Caco-2 (cell line): ENCODE measurements at regions of chr9 and their contacts with region 1.

Region 1: GRCh38 chr9:96391021-96391765 is 7.7 kb upstream of the SLC35D2 start:
- DNase-seq: peak; percentile 84 to 91
- H3K4me3 ChIP-seq: no peak overlapping the region
- H3K4me3 Mint-ChIP-seq: no peak overlapping the region
- H3K27ac Mint-ChIP-seq: peak overlapping the region; percentile 87
- H3K4me1 ChIP-seq: peaks cover 37% of the 10 kb centered on the region
- H3K4me1 Mint-ChIP-seq: peaks cover 30% of the 10 kb centered on the region
- H3K27me3 ChIP-seq: no peaks in the 10 kb centered on the region
- H3K27me3 Mint-ChIP-seq: no peaks in the 10 kb centered on the region
- CTCF ChIP-seq: no peak

Region 2: GRCh38 chr9:96344458-96345180 is 46.6 kb before region 1 on chr9:
- CTCF ChIA-PET with region 1: no interaction called
- POLR2A ChIA-PET with region 1: interaction called, 11 read pairs
- intact Hi-C with region 1: loop called (anchors 1 kb)
- DNase-seq: peak; percentile 74 to 91
- H3K4me3 ChIP-seq: no peak overlapping the region
- H3K4me3 Mint-ChIP-seq: no peak overlapping the region
- H3K27ac Mint-ChIP-seq: no peak overlapping the region
- H3K4me1 ChIP-seq: peaks cover 48% of the 10 kb centered on the region
- H3K4me1 Mint-ChIP-seq: peaks cover 7% of the 10 kb centered on the region
- H3K27me3 ChIP-seq: no peaks in the 10 kb centered on the region
- H3K27me3 Mint-ChIP-seq: no peaks in the 10 kb centered on the region
- CTCF ChIP-seq: no peak

Region 3: GRCh38 chr9:96360976-96361375 is 30.2 kb before region 1 on chr9:
- CTCF ChIA-PET with region 1: no interaction called
- POLR2A ChIA-PET with region 1: no interaction called
- intact Hi-C with region 1: no loop called
- DNase-seq: no peak
- H3K4me3 ChIP-seq: no peak overlapping the region
- H3K4me3 Mint-ChIP-seq: no peak overlapping the region
- H3K27ac Mint-ChIP-seq: no peak overlapping the region
- H3K4me1 ChIP-seq: no peaks in the 10 kb centered on the region
- H3K4me1 Mint-ChIP-seq: no peaks in the 10 kb centered on the region
- H3K27me3 ChIP-seq: no peaks in the 10 kb centered on the region
- H3K27me3 Mint-ChIP-seq: no peaks in the 10 kb centered on the region
- CTCF ChIP-seq: no peak

Region 4: GRCh38 chr9:96408409-96409280 is 17.5 kb after region 1 on chr9:
- CTCF ChIA-PET with region 1: no interaction called
- POLR2A ChIA-PET with region 1: interaction called, 3 read pairs
- intact Hi-C with region 1: loop called (anchors 1 kb)
- DNase-seq: peak; percentile 49 to 61
- H3K4me3 ChIP-seq: no peak overlapping the region
- H3K4me3 Mint-ChIP-seq: no peak overlapping the region
- H3K27ac Mint-ChIP-seq: no peak overlapping the region
- H3K4me1 ChIP-seq: peaks cover 13% of the 10 kb centered on the region; the same call in 1 of the 2 replicates
- H3K4me1 Mint-ChIP-seq: peaks cover 12% of the 10 kb centered on the region
- H3K27me3 ChIP-seq: no peaks in the 10 kb centered on the region
- H3K27me3 Mint-ChIP-seq: no peaks in the 10 kb centered on the region
- CTCF ChIP-seq: no peak

Region 5: DNA sequence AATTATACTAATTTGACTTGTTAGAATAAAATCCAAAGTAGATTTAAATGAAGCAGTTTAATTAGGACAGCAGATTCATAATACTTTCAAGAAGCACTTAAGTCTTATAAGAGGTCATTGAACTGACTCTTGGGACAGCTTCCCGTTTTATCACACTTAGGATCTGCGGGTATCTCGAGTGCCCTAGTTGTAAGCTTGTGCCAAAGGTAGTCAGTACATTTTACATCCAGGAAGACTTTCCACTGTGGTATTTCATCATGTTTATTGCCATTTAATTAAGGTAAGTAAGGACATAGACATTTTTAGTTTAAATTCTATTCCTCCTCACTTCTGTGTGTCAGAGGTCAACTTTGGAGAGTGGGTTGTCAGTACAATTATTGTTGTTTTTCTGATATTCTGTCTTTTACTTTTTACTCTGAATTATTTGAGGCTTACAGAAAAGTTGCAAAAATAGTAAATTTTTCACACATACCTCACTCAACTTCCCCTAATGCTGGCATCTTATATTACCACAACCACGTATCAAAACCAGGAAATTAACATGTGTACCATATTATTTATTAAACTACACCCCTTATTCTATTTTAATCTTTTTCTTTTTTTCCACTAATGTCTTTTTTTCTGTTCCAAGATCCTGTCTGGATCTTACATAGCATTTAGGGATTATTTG is 34.4 kb after region 1 on chr9:
- CTCF ChIA-PET with region 1: no interaction called
- POLR2A ChIA-PET with region 1: no interaction called
- intact Hi-C with region 1: no loop called
- DNase-seq: no peak
- H3K4me3 ChIP-seq: no peak overlapping the region
- H3K4me3 Mint-ChIP-seq: no peak overlapping the region
- H3K27ac Mint-ChIP-seq: peak overlapping the region; percentile 59
- H3K4me1 ChIP-seq: peaks cover 18% of the 10 kb centered on the region
- H3K4me1 Mint-ChIP-seq: peaks cover 6% of the 10 kb centered on the region
- H3K27me3 ChIP-seq: no peaks in the 10 kb centered on the region
- H3K27me3 Mint-ChIP-seq: no peaks in the 10 kb centered on the region
- CTCF ChIP-seq: no peak